ENCODE measurements at regions of chr10 and their contacts with region 1.

Region 1: GRCh38 chr10:14405076-14406065 is 74.6 kb upstream of the FRMD4A start:
- DNase-seq: peak; percentile 99
- ATAC-seq: peak; percentile 91
- H3K4me3 ChIP-seq: no peak overlapping the region
- H3K27ac ChIP-seq: peak overlapping the region; percentile 100
- H3K4me1 ChIP-seq: peaks cover 24% of the 10 kb centered on the region
- H3K27me3 ChIP-seq: no peaks in the 10 kb centered on the region
- CTCF ChIP-seq: no peak
- POLR2A ChIP-seq: no peak
- RAD21 ChIP-seq: no peak; the same call in 1 of the 2 replicates

Region 2: DNA sequence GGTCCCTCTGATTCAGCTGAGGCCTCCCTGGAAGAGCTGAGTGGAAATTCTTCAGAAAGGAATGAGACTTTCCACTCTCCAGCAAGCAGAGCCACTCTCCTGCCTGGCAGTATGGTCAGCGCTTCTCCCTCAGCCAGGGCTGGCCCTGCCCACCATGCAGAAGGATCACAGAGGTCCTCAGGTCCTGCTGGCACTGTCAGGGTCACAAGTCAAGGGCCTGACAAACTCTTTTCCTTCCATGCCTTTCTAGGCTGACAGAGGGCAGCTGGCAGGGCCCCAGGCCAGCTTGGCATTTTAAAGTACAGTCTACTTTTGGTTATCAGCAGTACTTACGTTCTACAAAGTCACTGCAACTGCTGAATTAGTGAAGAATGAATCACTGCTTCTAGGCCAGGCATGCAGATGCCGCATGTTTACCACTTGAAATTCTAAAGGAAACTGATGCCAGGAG is 44.7 kb after region 1 on chr10:
- CTCF ChIA-PET with region 1: no interaction called
- POLR2A ChIA-PET with region 1: no interaction called
- dilution Hi-C with region 1: no loop called
- in situ Hi-C with region 1: no loop called
- intact Hi-C with region 1: loop called (anchors 5 kb)
- DNase-seq: peak; percentile 65
- ATAC-seq: peak; percentile 88
- H3K4me3 ChIP-seq: no peak overlapping the region
- H3K27ac ChIP-seq: peak overlapping the region; percentile 86
- H3K4me1 ChIP-seq: peaks cover 12% of the 10 kb centered on the region
- H3K27me3 ChIP-seq: no peaks in the 10 kb centered on the region
- CTCF ChIP-seq: no peak
- POLR2A ChIP-seq: no peak
- RAD21 ChIP-seq: no peak

Measured in IMR-90 (cell line).